Activated T-helper 1 cell treated with anti-CD3 and anti-CD28 coated beads, Interleukin-12 subunit alpha, Interleukin-12 subunit beta, Interleukin-2, Interleukin-4 antibody, amounts not matched to agents 30 ng/mL and 10 ng/mL and 1 ng/mL, durations not matched to agents 14 hours and 24 hours and 36 hours (primary cell): ENCODE measurements at regions of chr6 and their contacts with region 1.

Region 1: DNA sequence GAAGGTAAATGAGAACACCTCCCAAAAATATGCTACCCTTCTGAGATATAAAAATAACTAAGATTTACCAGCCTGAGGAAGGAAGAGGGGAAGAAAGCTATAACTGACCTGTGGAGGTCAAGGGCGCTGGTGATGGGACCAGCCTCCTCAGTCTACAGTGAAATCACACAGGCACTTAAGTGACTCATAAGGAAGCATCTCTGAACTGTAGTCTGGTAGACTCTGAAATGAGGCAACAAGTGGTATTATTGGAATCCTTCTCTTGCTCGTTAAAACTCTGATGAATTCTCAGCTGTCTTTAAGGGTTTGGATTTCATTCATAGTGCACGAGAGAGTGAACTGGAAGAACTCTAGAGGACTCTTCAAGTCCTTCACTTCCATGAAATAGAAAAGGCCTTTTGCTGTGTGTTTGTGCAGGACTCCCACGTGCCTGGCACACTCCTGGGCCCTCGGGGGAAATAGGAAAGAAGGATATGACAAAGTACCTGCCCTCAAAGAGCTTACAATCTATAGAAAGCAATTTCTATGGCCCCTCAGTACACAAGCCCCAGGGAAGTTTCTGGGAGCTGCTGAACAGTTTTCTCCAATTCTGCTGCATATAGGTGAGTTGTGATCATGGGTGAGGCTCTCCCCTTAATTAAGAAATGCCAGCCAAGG is 231.8 kb upstream of the RREB1 start:
- DNase-seq: no peak
- H3K4me3 Mint-ChIP-seq: no peak overlapping the region
- H3K27ac Mint-ChIP-seq: no peak overlapping the region
- H3K4me1 Mint-ChIP-seq: peaks cover 7% of the 10 kb centered on the region
- H3K27me3 Mint-ChIP-seq: peaks cover 4% of the 10 kb centered on the region

Region 2: DNA sequence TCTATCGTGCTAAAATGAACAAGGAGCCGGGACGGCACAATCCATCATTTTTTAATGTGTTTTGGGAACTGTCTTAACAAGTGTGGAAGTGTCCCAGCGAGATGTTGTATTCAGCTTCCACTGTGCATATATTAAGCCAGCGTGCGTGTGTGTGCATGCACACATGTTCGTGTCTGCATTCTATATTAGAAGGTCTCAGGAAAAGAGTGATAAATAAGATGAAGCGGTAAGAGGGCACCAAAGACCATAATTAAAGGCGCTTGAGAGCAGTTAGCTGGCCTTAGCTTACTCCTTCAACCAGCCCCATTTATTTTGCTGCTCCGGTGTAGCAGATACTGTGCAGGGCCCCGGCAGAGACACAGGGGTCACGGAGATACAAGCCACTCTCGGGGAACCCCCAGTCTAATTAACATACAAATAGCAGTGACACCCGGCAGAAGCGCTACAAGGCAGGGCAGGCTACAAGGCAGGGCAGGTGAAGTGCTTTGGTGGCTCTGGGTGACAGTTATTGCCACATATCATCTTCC is 25.3 kb after region 1 on chr6:
- intact Hi-C with region 1: loop called (anchors 1 kb)
- DNase-seq: no peak
- H3K4me3 Mint-ChIP-seq: no peak overlapping the region
- H3K27ac Mint-ChIP-seq: no peak overlapping the region
- H3K4me1 Mint-ChIP-seq: no peaks in the 10 kb centered on the region
- H3K27me3 Mint-ChIP-seq: peaks cover 42% of the 10 kb centered on the region